ENCODE measurements at regions of chr15 and their contacts with region 1.

Region 1: GRCh38 chr15:33700695-33701304 is 267.5 kb upstream of the CHRM5 start:
- DNase-seq: peak in 1 of 2 experiments; percentile 68
- H3K4me3 ChIP-seq: no peak overlapping the region
- H3K27ac ChIP-seq: no peak overlapping the region
- H3K4me1 ChIP-seq: no peaks in the 10 kb centered on the region
- H3K27me3 ChIP-seq: no peaks in the 10 kb centered on the region
- CTCF ChIP-seq: peak; percentile 85

Region 2: DNA sequence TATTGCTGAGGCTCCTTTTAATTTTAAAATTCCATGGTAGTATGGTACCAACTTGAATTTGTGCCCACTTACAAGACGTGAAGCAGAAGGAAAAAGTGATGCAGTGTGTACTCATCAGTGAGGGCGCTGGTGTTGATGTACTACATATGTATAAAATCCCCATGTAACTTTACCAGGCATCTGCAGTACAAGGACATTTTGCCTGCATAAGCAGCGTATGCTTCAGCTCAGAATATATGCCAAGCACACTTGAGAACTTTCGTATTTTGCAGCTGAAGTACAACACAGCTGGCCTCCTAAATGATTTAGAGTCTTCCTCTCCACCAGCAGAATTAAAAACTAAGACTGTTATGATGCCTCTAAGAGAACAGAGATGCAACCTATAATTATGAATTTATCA is 281.1 kb before region 1 on chr15:
- CTCF ChIA-PET with region 1: no interaction called
- POLR2A ChIA-PET with region 1: no interaction called
- intact Hi-C with region 1: no loop called
- DNase-seq: no peak
- H3K4me3 ChIP-seq: no peak overlapping the region
- H3K27ac ChIP-seq: no peak overlapping the region
- H3K4me1 ChIP-seq: no peaks in the 10 kb centered on the region
- H3K27me3 ChIP-seq: no peaks in the 10 kb centered on the region
- CTCF ChIP-seq: no peak

Region 3: DNA sequence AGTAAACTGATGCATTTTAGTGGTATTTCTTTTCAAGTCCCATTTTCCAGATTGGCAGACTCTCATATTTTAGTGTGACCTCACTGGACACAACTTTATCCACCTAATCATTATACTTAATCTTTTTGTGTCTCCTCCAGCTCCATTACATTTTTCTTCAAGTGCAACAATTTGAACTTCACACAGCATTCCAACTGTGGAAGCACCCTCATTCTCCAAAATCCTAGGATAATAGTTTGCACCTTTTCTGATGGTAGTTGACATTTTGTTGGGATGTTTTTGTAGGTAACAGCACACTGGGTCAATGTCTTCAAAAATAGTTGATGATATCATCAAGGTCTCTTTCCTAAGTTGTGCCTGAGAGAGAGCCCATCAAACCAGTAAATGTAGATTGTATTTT is 267.0 kb before region 1 on chr15:
- CTCF ChIA-PET with region 1: no interaction called
- POLR2A ChIA-PET with region 1: no interaction called
- intact Hi-C with region 1: no loop called
- DNase-seq: no peak
- H3K4me3 ChIP-seq: no peak overlapping the region
- H3K27ac ChIP-seq: no peak overlapping the region
- H3K4me1 ChIP-seq: no peaks in the 10 kb centered on the region
- H3K27me3 ChIP-seq: no peaks in the 10 kb centered on the region
- CTCF ChIP-seq: no peak

Region 4: DNA sequence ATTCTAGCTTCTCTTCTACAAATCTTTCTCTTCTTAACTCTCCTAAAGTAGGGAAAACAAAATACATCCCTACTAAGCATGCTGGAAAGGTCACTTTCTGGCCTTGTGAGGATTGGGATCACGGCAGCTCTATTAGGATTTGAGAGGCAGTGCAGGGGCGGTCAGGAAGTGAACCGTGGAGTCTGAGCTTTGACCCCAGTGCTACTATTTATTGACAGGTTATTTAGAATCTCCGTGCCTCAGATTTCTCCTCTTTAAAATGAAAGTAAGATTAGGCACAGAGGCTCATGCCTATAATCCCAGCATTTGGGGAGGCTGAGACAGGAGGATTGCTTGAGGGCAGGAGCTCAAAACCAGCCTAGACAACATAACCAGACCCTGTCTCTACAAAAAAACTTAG is 225.5 kb after region 1 on chr15:
- CTCF ChIA-PET with region 1: no interaction called
- POLR2A ChIA-PET with region 1: no interaction called
- intact Hi-C with region 1: no loop called
- DNase-seq: no peak
- H3K4me3 ChIP-seq: no peak overlapping the region
- H3K27ac ChIP-seq: no peak overlapping the region
- H3K4me1 ChIP-seq: no peaks in the 10 kb centered on the region
- H3K27me3 ChIP-seq: no peaks in the 10 kb centered on the region
- CTCF ChIP-seq: no peak

Region 5: DNA sequence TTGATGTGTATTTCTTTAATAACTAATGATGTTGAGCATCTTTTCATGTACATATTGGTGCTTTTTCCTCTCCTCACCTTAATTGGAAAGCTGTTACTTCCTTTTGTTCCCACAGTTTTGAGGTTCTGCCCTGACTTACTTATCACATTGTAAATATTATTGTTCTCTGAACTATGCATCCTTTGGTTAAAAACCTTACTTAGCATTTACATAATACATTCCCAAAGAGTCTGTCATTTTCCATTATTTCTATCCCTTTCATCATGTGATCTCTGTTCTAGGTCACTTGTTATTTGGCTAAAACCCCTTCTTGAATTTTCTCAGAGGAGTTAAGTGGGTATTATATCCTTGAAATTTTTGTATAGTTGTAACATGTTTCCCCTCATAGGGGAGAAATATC is 603.8 kb after region 1 on chr15:
- CTCF ChIA-PET with region 1: interaction called, 14 read pairs
- POLR2A ChIA-PET with region 1: no interaction called
- intact Hi-C with region 1: no loop called
- DNase-seq: no peak
- H3K4me3 ChIP-seq: no peak overlapping the region
- H3K27ac ChIP-seq: no peak overlapping the region
- H3K4me1 ChIP-seq: peaks cover 8% of the 10 kb centered on the region; the same call in 1 of the 2 replicates
- H3K27me3 ChIP-seq: no peaks in the 10 kb centered on the region
- CTCF ChIP-seq: no peak